HEK293 (cell line): ENCODE measurements at regions of chr11 and their contacts with region 1.

Region 1: GRCh38 chr11:60183591-60184205 is 815 bp upstream of the MS4A6A start:
- H3K4me3 ChIP-seq: no peak overlapping the region
- H3K27ac ChIP-seq: no peak overlapping the region
- H3K4me1 ChIP-seq: no peaks in the 10 kb centered on the region
- CTCF ChIP-seq: no peak

Region 2: DNA sequence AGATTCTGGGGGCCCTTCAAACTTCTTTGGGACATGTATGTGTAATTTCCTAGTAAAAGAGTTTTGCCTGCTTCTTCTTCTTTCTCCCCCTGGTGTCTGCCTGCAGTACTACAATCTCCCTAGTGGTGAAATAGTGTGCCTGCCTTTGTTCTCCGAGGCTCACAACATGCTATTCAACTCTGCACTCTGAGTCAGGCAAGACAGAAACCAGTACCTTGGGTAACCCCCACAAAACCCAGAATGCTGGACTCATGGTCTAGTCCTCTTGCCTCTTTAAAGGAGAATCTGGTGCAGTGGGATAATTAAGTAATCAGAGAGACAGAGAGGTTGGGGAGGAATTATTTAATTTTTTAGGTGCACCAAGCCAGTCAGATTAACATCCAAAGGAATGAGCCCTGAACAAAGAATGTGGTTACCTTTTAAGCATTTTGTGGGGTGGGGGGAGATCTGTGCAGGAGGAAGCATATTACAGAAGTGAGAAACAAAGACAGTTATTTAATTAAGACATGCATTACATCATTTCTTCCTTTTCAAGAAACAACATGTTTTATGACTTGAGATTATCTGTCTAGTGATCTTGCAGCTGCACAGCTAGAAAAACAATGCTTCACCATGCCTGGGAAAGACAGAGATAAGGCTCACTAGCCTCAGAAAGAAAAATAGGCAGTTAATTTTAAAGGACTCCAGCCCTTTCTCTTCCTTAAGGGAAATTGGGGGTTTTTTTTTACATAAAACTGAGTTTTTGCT is 10.2 kb after region 1 on chr11:
- CTCF ChIA-PET with region 1: interaction called, 16 read pairs
- POLR2A ChIA-PET with region 1: no interaction called
- H3K4me3 ChIP-seq: no peak overlapping the region
- H3K27ac ChIP-seq: peak overlapping the region; percentile 56; the same call in 1 of the 2 replicates
- H3K4me1 ChIP-seq: no peaks in the 10 kb centered on the region
- CTCF ChIP-seq: no peak